ENCODE measurements at regions of chr9 and their contacts with region 1.

Region 1: DNA sequence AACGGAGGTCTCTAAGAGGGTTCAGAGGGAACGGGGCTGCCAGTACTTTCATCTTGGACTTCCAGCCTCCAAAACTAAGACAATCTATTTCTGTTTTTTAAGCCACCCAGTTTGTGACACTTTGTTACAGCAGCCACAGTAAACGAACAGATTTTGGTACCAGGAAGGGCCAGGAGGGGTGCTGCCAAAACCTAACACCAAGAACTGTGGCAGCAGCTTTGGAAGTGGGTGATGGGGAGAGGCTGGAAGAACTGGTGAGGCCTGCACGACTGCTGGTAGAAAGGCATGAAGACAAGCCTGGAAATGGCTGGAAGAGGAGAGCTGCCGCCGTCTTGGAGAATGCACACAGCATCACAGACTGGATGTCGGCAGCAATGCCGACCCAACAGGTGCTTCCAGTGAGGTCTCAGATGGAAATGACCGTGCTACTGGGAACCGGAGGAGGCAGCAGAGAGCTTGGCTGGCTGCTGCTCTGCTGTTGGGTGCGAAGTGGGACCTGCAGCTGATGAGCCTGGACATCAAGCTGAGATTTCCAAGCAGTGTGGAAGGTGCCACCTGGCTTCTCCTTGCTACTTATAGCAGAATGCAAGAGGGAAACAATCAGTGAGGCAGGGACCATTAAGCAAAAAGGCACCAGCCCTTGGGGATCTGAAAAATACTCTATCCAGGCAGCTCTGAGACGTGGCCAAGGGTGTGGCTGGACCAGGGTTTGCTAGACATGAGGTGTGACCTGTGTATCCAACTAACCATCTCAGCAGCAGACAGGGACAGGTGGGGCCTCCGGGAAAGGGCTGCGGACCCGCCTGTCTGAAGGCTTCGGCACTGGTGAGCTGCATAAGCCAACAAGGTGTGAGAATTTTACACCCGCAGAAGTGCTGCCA is 4.7 kb upstream of the TMEM210 start:
- DNase-seq: no peak
- H3K4me3 ChIP-seq: no peak overlapping the region
- H3K27ac ChIP-seq: no peak overlapping the region
- H3K4me1 ChIP-seq: peaks cover 0 to 8% (median 3%) of the 10 kb centered on the region in 4 experiments; a peak in 5 of 7 replicates
- H3K27me3 ChIP-seq: peaks cover 0 to 10% (median 5%) of the 10 kb centered on the region in 4 experiments; a peak in 4 of 7 replicates
- CTCF ChIP-seq: peak in 2 of 3 experiments; percentile 58 to 76; a peak in 3 of 4 replicates
- EP300 ChIP-seq: no peak
- POLR2A ChIP-seq: no peak; a peak in 1 of 3 replicates
- RAD21 ChIP-seq: peak; percentile 38 to 57

Region 2: GRCh38 chr9:137097761-137098462 is 78.6 kb before region 1 on chr9:
- CTCF ChIA-PET with region 1: no interaction called
- POLR2A ChIA-PET with region 1: no interaction called
- DNase-seq: no peak
- H3K4me3 ChIP-seq: no peak overlapping the region
- H3K27ac ChIP-seq: no peak overlapping the region
- H3K4me1 ChIP-seq: no peaks in the 10 kb centered on the region
- H3K27me3 ChIP-seq: no peaks in the 10 kb centered on the region
- CTCF ChIP-seq: no peak
- EP300 ChIP-seq: no peak
- POLR2A ChIP-seq: no peak
- RAD21 ChIP-seq: no peak

Region 3: GRCh38 chr9:137138722-137139467 is 37.6 kb before region 1 on chr9 and contains the start of gene GRIN1:
- CTCF ChIA-PET with region 1: interaction called, 11 read pairs
- POLR2A ChIA-PET with region 1: interaction called, 3 read pairs
- DNase-seq: peak in 1 of 2 experiments; percentile 77
- H3K4me3 ChIP-seq: peak within 1 kb of the TSS in 2 of 4 experiments; percentile 38 to 44; a peak in 4 of 8 replicates
- H3K27ac ChIP-seq: no peak within 1 kb of the TSS
- H3K4me1 ChIP-seq: peaks cover 0 to 14% (median 11%) of the 10 kb centered on the region in 4 experiments; a peak in 6 of 7 replicates
- H3K27me3 ChIP-seq: peaks cover 25 to 79% (median 72%) of the 10 kb centered on the region in 4 experiments
- CTCF ChIP-seq: no peak
- EP300 ChIP-seq: no peak
- POLR2A ChIP-seq: no peak
- RAD21 ChIP-seq: no peak
- total RNA-seq, gene GRIN1: 2.1 TPM in 2 replicates

Region 4: GRCh38 chr9:137162505-137163100 is 13.9 kb before region 1 on chr9:
- CTCF ChIA-PET with region 1: interaction called, 16 read pairs
- POLR2A ChIA-PET with region 1: interaction called, 15 read pairs
- DNase-seq: peak in 1 of 2 experiments; percentile 66
- H3K4me3 ChIP-seq: peak overlapping the region; percentile 32 to 61 (median 34)
- H3K27ac ChIP-seq: no peak overlapping the region
- H3K4me1 ChIP-seq: peaks cover 0 to 11% (median 6%) of the 10 kb centered on the region in 4 experiments; a peak in 6 of 7 replicates
- H3K27me3 ChIP-seq: peaks cover 53 to 98% (median 90%) of the 10 kb centered on the region in 4 experiments
- CTCF ChIP-seq: peak in 1 of 3 experiments; percentile 3; a peak in 1 of 4 replicates
- EP300 ChIP-seq: no peak
- POLR2A ChIP-seq: no peak
- RAD21 ChIP-seq: no peak; a peak in 1 of 4 replicates

Region 5: GRCh38 chr9:137188490-137189296 is 12.2 kb after region 1 on chr9 and contains the starts of genes ANAPC2 and SSNA1:
- CTCF ChIA-PET with region 1: interaction called, 47 read pairs
- POLR2A ChIA-PET with region 1: interaction called, 15 read pairs
- DNase-seq: peak; percentile 80 to 98
- H3K4me3 ChIP-seq: peak within 1 kb of the TSS; percentile 71 to 92 (median 82)
- H3K27ac ChIP-seq: peak within 1 kb of the TSS; percentile 57; the same call in 1 of the 2 replicates
- H3K4me1 ChIP-seq: peaks cover 0 to 17% (median 6%) of the 10 kb centered on the region in 4 experiments; a peak in 5 of 7 replicates
- H3K27me3 ChIP-seq: no peaks in the 10 kb centered on the region; a peak in 1 of 7 replicates
- CTCF ChIP-seq: peak in 2 of 3 experiments; percentile 37 to 57; a peak in 3 of 4 replicates
- EP300 ChIP-seq: peak in 1 of 2 experiments; percentile 25; a peak in 1 of 3 replicates
- POLR2A ChIP-seq: peak in 1 of 2 experiments; percentile 88; a peak in 2 of 3 replicates
- RAD21 ChIP-seq: peak; percentile 34 to 45; a peak in 3 of 4 replicates
- total RNA-seq, gene ANAPC2: 37.7 and 41.9 TPM in 2 replicates
- total RNA-seq, gene SSNA1: 87.3 and 91.3 TPM in 2 replicates

Region 6: GRCh38 chr9:137223078-137223970 is 46.8 kb after region 1 on chr9:
- CTCF ChIA-PET with region 1: interaction called, 17 read pairs
- POLR2A ChIA-PET with region 1: interaction called, 6 read pairs
- DNase-seq: peak; percentile 96 to 99
- H3K4me3 ChIP-seq: peak overlapping the region; percentile 67 to 92 (median 79)
- H3K27ac ChIP-seq: no peak overlapping the region
- H3K4me1 ChIP-seq: peaks cover 0 to 20% (median 10%) of the 10 kb centered on the region in 4 experiments; a peak in 5 of 7 replicates
- H3K27me3 ChIP-seq: no peaks in the 10 kb centered on the region; a peak in 2 of 7 replicates
- CTCF ChIP-seq: no peak
- EP300 ChIP-seq: no peak
- POLR2A ChIP-seq: peak in 1 of 2 experiments; percentile 53; a peak in 1 of 3 replicates
- RAD21 ChIP-seq: no peak

Region 7: DNA sequence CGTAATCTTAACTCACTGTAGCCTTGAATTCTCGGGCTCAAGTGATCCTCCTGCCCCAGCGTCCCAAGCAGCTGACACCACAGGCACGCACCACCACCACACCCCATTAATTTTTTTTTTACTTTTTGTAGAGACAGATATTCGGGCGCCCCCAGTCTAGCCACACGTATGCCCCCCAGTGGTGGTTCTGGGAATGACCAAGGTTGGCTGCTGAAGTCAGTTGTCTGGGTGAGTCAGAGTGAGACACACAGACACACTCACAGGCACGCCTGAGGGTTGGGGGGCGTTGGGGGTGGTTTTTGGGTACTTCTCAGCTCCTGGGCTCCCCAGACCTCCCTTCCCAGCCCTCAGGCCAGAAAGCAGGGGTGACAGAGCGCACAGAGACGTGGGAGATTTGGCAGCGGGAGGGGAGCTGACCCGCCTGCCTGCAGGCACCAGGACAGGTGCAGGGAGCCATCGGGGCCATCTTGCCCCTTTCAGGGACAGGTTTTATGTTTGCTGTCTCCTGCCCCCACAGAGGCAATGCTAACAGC is 268.8 kb after region 1 on chr9:
- CTCF ChIA-PET with region 1: no interaction called
- POLR2A ChIA-PET with region 1: no interaction called
- DNase-seq: peak in 1 of 2 experiments; percentile 97
- H3K4me3 ChIP-seq: no peak overlapping the region
- H3K27ac ChIP-seq: no peak overlapping the region
- H3K4me1 ChIP-seq: peaks cover 0 to 3% (median under 1%) of the 10 kb centered on the region in 4 experiments; a peak in 3 of 7 replicates
- H3K27me3 ChIP-seq: no peaks in the 10 kb centered on the region
- CTCF ChIP-seq: peak in 2 of 3 experiments; percentile 77 to 89; a peak in 3 of 4 replicates
- EP300 ChIP-seq: no peak
- POLR2A ChIP-seq: no peak
- RAD21 ChIP-seq: peak; percentile 56 to 72

Measured in H1 (cell line).